ENCODE measurements at regions of chr15 and their contacts with region 1.

Region 1: DNA sequence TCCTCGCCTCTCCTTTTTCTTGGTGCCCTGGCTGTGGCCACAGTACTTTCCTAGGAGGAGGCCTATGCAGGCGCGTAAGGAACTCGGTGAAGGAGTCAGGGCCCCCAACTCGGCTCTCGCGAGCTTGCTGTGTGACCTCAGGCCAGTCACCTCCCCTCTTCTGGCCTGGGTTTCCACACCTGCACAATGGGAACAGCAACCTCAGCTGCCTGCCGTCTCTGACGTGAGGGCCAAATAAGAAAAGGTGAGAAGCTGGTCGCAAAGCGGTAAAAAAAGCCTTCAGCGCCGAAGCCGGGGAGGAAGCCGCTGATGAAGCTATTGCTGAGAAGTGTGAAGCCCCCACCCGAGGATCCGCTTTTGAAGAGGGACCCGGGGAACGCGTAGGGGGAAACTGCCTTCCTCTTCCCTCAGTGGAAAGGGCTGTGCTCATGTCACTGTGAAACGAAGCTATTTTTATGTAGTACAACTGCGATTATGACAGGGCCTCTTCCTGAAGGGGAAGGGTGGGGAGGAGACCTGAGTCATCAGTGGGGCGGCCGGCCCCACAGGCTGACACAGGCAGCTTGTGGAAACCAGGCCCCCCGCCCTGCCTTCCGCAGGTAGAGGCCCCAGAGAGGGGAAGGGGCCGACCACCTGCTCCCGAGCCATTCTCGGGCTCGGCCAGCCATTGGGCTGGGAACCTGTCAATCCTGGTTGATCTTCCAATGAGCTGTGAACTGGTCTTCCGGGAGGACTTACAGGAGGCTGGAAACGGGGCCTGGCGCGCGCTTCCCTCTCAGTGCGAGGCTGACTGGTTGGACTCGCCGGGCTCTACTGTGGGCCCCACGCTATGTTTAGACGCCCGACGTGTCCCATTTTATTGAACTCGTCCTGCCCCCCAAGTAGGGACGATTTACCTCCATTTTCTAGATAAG is 18.0 kb upstream of the ANKDD1A start:
- DNase-seq: peak; percentile 85 to 98 (median 95)
- ATAC-seq: peak; percentile 65
- H3K4me3 ChIP-seq: peak overlapping the region; percentile 58
- H3K4me3 Mint-ChIP-seq: peak overlapping the region; percentile 86
- H3K27ac ChIP-seq: peak overlapping the region; percentile 97
- H3K27ac Mint-ChIP-seq: peak overlapping the region; percentile 100
- H3K4me1 ChIP-seq: peaks cover 70% of the 10 kb centered on the region
- H3K4me1 Mint-ChIP-seq: peaks cover 62% of the 10 kb centered on the region
- H3K27me3 ChIP-seq: no peaks in the 10 kb centered on the region
- H3K27me3 Mint-ChIP-seq: no peaks in the 10 kb centered on the region
- CTCF ChIP-seq: no peak

Region 2: DNA sequence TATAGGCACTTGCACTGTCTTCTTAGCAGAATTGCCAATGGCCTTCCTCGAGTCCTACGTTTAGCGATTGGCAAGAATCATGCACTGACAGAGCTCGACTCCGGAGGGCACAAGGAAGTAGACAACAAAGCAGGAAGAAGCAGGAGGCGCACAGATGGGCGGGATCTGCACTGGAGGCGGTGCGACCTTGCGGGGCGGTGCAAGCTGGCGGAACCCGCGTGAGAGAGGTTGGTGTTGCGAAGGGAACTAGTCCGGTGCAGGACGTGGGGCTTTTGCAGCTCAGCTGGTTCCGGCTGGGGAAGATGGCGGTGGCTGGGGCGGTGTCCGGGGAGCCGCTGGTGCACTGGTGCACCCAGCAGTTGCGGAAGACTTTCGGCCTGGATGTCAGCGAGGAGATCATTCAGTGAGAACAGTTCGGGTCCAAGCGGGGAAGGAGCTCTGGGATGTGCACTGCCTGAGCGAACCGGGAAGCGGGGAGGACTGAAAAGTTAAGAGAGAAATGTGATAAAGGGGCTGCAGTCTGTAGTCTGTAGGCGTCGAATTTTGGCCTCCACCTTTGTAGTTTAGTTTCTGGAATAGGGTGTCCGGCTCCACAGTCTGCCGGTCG is 506.1 kb before region 1 on chr15 and contains the start of gene TRIP4:
- CTCF ChIA-PET with region 1: no interaction called
- POLR2A ChIA-PET with region 1: interaction called, 22 read pairs
- intact Hi-C with region 1: no loop called
- DNase-seq: peak; percentile 94 to 98 (median 96)
- ATAC-seq: peak; percentile 99
- H3K4me3 ChIP-seq: peak within 1 kb of the TSS; percentile 76
- H3K4me3 Mint-ChIP-seq: peak within 1 kb of the TSS; percentile 98
- H3K27ac ChIP-seq: peak within 1 kb of the TSS in 1 of 2 donors; percentile 8
- H3K27ac Mint-ChIP-seq: peak within 1 kb of the TSS; percentile 81
- H3K4me1 ChIP-seq: peaks cover 26% of the 10 kb centered on the region
- H3K4me1 Mint-ChIP-seq: peaks cover 18% of the 10 kb centered on the region
- H3K27me3 ChIP-seq: no peaks in the 10 kb centered on the region
- H3K27me3 Mint-ChIP-seq: no peaks in the 10 kb centered on the region
- CTCF ChIP-seq: no peak
- total RNA-seq, gene TRIP4: 9.6 to 10.7 TPM

Region 3: DNA sequence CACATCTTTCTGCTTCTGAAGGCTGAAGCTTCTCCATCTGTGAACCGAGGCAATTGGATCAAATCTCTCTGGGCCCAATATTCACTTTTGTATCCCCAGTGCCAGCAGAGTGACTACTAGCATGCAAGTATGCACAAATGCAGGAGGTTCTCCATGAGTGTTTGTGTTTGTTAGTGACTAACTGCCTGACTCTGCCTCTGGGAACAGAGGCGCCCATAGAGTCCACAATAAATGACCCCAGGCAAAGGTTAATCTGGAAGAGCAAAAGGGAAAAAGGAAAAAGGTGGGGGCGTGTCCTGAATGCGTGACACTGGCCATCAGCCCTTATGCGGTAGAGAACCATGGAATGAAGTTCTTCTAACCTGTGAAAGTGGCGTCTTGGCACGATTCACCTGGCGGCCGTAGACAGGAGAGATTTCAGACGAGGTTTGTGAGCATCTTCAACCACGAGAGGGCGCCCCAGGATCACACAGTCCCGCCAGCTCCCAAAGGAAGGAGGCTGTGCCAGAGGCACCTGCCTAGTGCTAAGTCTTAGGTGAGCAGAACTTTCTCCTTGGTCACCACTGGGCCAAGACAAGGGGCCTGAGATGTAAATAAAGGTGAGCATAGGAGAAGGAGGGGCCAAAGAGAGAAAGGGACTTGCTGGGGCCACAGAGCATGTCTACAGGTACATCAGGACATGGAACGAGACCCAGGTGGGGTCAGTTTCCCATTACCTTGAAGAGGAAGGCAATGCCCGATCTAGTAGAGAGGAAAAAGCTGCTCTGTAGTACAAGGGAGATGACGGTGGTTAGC is 162.5 kb before region 1 on chr15:
- CTCF ChIA-PET with region 1: interaction called, 13 read pairs
- POLR2A ChIA-PET with region 1: no interaction called
- intact Hi-C with region 1: no loop called
- DNase-seq: peak; percentile 76 to 94 (median 85)
- ATAC-seq: peak; percentile 80
- H3K4me3 ChIP-seq: no peak overlapping the region
- H3K4me3 Mint-ChIP-seq: no peak overlapping the region
- H3K27ac ChIP-seq: no peak overlapping the region
- H3K27ac Mint-ChIP-seq: no peak overlapping the region
- H3K4me1 ChIP-seq: peaks cover 9% of the 10 kb centered on the region
- H3K4me1 Mint-ChIP-seq: peaks cover 8% of the 10 kb centered on the region
- H3K27me3 ChIP-seq: no peaks in the 10 kb centered on the region
- H3K27me3 Mint-ChIP-seq: peaks cover 9% of the 10 kb centered on the region
- CTCF ChIP-seq: peak; percentile 85

Region 4: DNA sequence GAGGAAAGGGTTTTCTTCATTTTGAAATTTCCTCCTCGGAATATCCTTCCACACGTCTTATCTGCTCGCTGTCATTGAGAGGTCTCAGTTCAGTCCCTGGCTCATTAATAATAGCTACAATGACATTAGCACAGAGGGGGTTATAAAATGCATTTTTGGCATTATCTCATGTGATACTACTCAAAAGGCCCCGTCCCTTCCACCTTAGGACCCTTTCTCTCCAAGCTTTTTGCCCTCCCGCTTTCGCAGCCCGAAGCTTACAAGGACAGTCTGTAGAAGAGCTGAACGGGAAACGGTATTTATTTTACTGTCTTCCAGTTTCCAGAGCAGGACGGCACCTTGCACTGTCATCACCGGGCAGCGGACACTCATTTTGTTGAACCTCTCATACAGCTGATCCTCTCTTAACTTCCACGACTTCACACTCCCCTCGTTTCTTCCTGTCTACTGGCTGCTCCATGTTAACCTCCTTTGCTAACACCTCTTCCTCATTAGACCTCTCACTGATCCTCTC is 57.7 kb before region 1 on chr15:
- CTCF ChIA-PET with region 1: interaction called, 44 read pairs
- POLR2A ChIA-PET with region 1: interaction called, 157 read pairs
- intact Hi-C with region 1: loop called (anchors 1 to 2 kb)
- DNase-seq: no peak
- ATAC-seq: no peak
- H3K4me3 ChIP-seq: no peak overlapping the region
- H3K4me3 Mint-ChIP-seq: peak overlapping the region; percentile 64
- H3K27ac ChIP-seq: peak overlapping the region in 1 of 2 donors; percentile 3
- H3K27ac Mint-ChIP-seq: peak overlapping the region; percentile 51
- H3K4me1 ChIP-seq: peaks cover 48% of the 10 kb centered on the region
- H3K4me1 Mint-ChIP-seq: peaks cover 54% of the 10 kb centered on the region
- H3K27me3 ChIP-seq: no peaks in the 10 kb centered on the region
- H3K27me3 Mint-ChIP-seq: no peaks in the 10 kb centered on the region
- CTCF ChIP-seq: peak; percentile 24

Region 5: DNA sequence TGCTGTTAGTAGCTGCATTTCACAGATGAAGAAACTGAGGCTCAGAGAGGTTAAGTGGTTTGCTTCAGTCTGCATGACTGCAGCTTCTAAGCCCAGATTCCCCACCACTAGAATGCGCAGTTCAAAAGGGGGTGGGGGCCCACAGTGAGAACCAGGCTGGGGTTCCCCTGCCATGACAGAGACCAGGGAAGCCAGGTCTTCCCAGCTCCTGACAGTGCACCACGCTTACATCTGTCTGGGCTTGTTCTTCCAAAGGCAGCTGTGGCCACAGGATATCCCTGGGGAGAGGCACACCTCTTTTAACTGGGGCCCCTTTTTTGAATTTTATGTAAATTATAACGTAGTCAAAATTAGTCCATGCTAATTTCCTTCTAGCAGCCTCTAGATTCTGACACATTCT is 46.7 kb before region 1 on chr15:
- CTCF ChIA-PET with region 1: interaction called, 6 read pairs
- POLR2A ChIA-PET with region 1: interaction called, 33 read pairs
- intact Hi-C with region 1: no loop called
- DNase-seq: no peak
- ATAC-seq: no peak
- H3K4me3 ChIP-seq: no peak overlapping the region
- H3K4me3 Mint-ChIP-seq: no peak overlapping the region
- H3K27ac ChIP-seq: no peak overlapping the region
- H3K27ac Mint-ChIP-seq: no peak overlapping the region
- H3K4me1 ChIP-seq: peaks cover 74% of the 10 kb centered on the region
- H3K4me1 Mint-ChIP-seq: peaks cover 77% of the 10 kb centered on the region
- H3K27me3 ChIP-seq: no peaks in the 10 kb centered on the region
- H3K27me3 Mint-ChIP-seq: no peaks in the 10 kb centered on the region
- CTCF ChIP-seq: no peak

Region 6: DNA sequence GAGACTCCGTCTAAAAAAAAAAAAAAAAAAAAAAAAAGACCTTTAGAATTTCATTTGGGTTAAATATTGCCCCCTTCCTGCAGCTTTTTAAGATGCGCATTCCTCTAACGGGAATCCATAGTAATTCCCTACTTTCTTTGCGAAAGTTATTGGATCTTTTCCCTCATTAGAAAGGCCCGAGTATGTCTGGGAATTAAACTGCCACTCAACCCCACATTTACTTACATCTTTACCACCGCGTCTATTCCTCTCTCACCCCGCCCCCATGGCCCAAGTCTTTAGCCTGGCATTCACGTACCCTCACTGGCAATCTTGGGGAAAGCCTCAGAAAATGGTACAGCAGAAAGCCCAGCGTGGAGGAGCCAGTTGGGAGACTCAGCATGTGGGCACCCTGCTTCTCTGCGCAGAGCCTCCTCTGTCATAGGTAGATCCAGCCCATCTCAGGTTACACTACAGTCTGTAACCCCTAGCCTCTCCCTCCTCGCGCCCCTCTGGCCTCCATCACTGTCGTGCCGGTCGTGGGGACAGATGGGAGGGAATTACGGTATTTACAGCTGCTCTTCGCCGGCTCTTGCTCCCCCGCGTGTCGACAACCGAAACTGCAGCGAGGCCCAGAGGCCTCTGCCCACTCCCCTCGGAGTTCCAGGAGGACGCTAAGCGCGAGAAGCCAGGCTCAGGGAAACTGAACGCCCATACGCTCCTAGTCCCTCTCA is 11.5 kb after region 1 on chr15:
- CTCF ChIA-PET with region 1: interaction called, 12 read pairs
- POLR2A ChIA-PET with region 1: interaction called, 59 read pairs
- intact Hi-C with region 1: no loop called
- DNase-seq: peak; percentile 63 to 88 (median 74)
- ATAC-seq: peak; percentile 74
- H3K4me3 ChIP-seq: peak overlapping the region; percentile 24
- H3K4me3 Mint-ChIP-seq: peak overlapping the region; percentile 79
- H3K27ac ChIP-seq: no peak overlapping the region
- H3K27ac Mint-ChIP-seq: no peak overlapping the region
- H3K4me1 ChIP-seq: peaks cover 36% of the 10 kb centered on the region
- H3K4me1 Mint-ChIP-seq: peaks cover 46% of the 10 kb centered on the region
- H3K27me3 ChIP-seq: peaks cover 0 to 3% of the 10 kb centered on the region in 2 experiments
- H3K27me3 Mint-ChIP-seq: peaks cover 16% of the 10 kb centered on the region
- CTCF ChIP-seq: peak; percentile 94

Region 7: DNA sequence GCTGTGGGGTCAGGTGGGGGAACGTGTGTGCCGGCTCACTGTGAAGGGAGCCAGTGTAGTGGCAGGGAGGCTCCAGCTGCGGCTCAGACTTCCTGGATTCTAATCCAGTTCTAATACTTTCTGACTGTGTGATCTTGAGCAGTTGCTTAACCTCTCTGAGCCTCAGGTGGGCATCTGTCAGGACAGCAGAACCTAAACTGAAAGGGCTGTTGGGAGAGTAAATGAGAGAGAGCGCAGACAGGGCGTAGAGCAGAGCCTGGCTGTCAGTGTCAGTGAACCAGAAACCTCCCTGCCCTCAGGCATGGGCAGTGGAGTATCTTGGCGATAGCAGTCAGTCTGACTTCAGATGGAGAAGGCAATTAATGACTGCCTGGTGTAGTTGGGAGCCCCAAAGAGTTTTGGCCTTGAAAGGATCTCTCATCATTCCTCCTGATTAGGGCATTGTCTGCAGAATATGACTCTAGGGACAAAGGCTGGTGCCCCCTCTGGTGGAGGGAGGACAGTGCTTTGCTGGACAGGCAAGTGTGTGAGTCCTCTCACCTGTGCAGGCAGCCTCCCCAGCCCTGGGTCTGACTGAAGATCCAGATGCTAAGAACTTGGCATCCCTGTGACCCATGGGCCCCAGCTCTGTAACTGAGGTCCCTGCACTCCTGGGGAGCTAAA is 192.4 kb after region 1 on chr15:
- CTCF ChIA-PET with region 1: no interaction called
- POLR2A ChIA-PET with region 1: no interaction called
- intact Hi-C with region 1: no loop called
- DNase-seq: peak in 2 of 14 experiments; percentile 8 to 21
- ATAC-seq: no peak
- H3K4me3 ChIP-seq: no peak overlapping the region
- H3K4me3 Mint-ChIP-seq: no peak overlapping the region
- H3K27ac ChIP-seq: no peak overlapping the region
- H3K27ac Mint-ChIP-seq: no peak overlapping the region
- H3K4me1 ChIP-seq: peaks cover 11% of the 10 kb centered on the region
- H3K4me1 Mint-ChIP-seq: peaks cover 11% of the 10 kb centered on the region
- H3K27me3 ChIP-seq: no peaks in the 10 kb centered on the region
- H3K27me3 Mint-ChIP-seq: peaks cover 10% of the 10 kb centered on the region
- CTCF ChIP-seq: no peak

Region 8: GRCh38 chr15:66386204-66387123 is 1492.7 kb after region 1 on chr15 and contains the start of gene MAP2K1:
- CTCF ChIA-PET with region 1: no interaction called
- POLR2A ChIA-PET with region 1: no interaction called
- intact Hi-C with region 1: loop called in 1 of 2 experiments (anchors 10 kb)
- DNase-seq: peak; percentile 94 to 100 (median 98)
- ATAC-seq: peak; percentile 82
- H3K4me3 ChIP-seq: peak within 1 kb of the TSS; percentile 75
- H3K4me3 Mint-ChIP-seq: peak within 1 kb of the TSS; percentile 99
- H3K27ac ChIP-seq: peak within 1 kb of the TSS; percentile 57 to 66
- H3K27ac Mint-ChIP-seq: peak within 1 kb of the TSS; percentile 96
- H3K4me1 ChIP-seq: peaks cover 46% of the 10 kb centered on the region
- H3K4me1 Mint-ChIP-seq: peaks cover 59% of the 10 kb centered on the region
- H3K27me3 ChIP-seq: no peaks in the 10 kb centered on the region
- H3K27me3 Mint-ChIP-seq: no peaks in the 10 kb centered on the region
- CTCF ChIP-seq: peak; percentile 90
- total RNA-seq, gene MAP2K1: 33.8 to 34.7 TPM

Measured in CD4-positive, alpha-beta T cell (primary cell).